ENCODE measurements at regions of chr7 and their contacts with region 1.

Region 1: DNA sequence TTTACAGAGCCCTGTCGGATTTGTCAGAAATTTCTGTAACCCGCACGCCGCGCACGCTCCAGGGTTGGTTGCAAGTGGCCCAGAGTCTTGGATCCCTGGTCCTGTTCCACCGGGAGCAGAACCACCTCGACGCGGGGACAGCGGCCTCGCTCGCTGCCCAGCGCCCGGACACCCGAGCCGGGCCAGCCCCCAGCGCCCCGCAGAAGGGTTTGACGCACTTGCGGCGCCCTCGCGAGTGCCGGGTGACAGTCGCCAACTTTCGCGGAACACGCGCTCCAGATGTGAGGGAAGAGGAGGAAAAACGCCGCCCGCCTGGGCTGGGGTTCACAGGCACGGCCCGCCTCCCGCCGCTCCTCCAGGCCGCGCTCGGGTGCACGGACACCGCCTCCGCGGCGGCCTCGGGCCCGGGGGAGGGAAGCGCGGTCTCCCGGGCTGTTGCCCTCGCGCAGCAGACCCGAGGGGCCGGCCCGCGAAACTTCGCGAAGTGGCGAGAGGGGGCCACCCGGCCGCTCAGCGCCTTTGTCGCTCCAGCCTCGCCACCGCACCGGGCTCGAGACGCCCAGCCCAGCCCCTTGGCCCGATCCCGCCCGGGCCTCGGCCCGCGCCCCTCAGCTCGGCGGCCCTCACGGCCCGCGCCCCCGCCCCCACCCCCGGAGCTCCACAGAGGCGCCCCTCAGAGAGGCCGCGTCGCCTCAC is 514 bp downstream of the RNF216 start:
- DNase-seq: peak in 1 of 2 experiments; percentile 25
- ATAC-seq: peak; percentile 77 to 78
- H3K4me3 ChIP-seq: peak overlapping the region; percentile 67
- H3K27ac ChIP-seq: peak overlapping the region; percentile 81 to 96
- H3K4me1 ChIP-seq: peaks cover 3% of the 10 kb centered on the region; the same call in 1 of the 3 replicates
- CTCF ChIP-seq: no peak
- EP300 ChIP-seq: no peak
- POLR2A ChIP-seq: no peak
- RAD21 ChIP-seq: no peak

Region 2: DNA sequence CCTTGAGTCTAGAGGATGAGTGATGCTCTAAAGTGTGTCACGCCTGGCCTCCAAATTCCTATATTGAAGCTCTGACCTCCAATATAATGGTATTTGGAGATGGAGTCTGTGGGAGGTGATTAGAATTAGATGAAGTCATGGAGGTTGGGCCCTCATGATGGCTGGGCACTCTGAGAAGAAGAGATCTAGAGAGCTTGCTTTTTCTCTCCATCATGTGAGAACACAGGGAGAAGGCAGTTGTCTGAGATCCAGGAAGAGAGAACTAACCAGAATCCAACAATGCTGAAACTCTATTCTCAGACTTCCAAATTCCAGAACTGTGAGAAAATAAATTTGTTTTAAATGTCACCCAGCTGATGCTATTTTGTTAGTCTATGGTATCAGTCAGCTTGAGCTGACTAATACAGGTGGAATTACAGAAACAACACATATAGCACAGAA is 14.6 kb before region 1 on chr7:
- CTCF ChIA-PET with region 1: interaction called, 42 read pairs
- POLR2A ChIA-PET with region 1: no interaction called
- DNase-seq: no peak
- ATAC-seq: peak; percentile 38 to 50; a peak in 5 of 6 replicates
- H3K4me3 ChIP-seq: no peak overlapping the region
- H3K27ac ChIP-seq: peak overlapping the region in 1 of 2 experiments; percentile 45; a peak in 3 of 6 replicates
- H3K4me1 ChIP-seq: peaks cover 33% of the 10 kb centered on the region
- CTCF ChIP-seq: no peak
- EP300 ChIP-seq: no peak
- POLR2A ChIP-seq: no peak
- RAD21 ChIP-seq: no peak

Region 3: DNA sequence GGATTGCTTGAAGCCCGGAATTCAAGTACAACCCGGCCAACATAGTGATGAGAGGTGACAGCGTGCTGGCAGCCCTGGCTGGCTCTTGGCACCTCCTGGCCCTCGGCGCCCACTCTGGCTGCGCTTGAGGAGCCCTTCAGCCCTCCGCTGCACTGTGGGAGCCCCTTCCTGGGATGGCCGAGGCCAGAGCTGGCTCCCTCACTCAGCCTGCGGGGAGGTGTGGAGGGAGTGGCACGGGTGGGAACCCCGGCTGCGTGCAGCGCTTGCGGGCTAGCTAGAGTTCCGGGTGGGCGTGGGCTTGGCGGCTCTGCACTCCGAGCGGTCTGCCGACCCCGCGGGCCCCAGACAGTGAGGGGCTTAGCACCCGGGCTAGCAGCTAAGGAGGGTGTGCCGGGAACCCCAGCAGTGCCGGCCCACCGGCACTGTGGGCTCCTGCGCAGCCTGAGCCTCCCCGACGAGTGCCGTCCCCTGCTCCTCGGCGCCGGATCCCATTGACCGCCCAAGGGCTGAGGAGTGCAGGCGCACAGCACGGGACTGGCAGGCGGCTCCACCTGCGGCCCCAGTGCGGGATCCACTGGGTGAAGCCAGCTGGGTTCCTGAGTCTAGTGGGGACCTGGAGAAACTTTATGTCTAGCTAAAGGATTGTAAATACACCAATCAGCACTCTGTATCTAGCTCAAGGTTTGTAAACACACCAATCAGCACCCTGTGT is 12.6 kb after region 1 on chr7:
- CTCF ChIA-PET with region 1: interaction called, 20 read pairs
- POLR2A ChIA-PET with region 1: no interaction called
- DNase-seq: no peak
- ATAC-seq: no peak
- H3K4me3 ChIP-seq: no peak overlapping the region
- H3K27ac ChIP-seq: no peak overlapping the region
- H3K4me1 ChIP-seq: no peaks in the 10 kb centered on the region
- CTCF ChIP-seq: no peak
- EP300 ChIP-seq: no peak
- POLR2A ChIP-seq: no peak
- RAD21 ChIP-seq: no peak

Region 4: DNA sequence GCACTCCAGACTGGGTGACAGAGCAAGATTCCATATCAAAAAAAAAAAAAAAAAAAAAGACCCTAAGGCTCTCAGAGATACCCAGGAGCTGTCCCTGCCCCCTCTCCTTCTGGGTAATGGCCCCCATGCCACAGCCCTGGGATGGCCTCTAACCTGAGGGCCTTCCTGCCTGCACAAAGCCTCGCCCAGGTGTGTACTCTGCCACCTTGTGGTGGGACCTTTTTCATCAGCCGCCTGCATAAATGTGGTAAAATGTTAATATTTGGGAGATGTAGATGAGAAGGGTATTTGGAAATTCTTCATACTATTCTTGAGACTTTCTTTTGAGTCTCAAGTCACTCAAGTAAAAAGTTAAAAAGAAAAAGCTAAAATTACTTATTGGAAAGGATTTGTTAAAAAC is 46.8 kb after region 1 on chr7:
- CTCF ChIA-PET with region 1: interaction called, 11 read pairs
- POLR2A ChIA-PET with region 1: interaction called, 3 read pairs
- DNase-seq: peak in 1 of 2 experiments; percentile 50
- ATAC-seq: no peak
- H3K4me3 ChIP-seq: no peak overlapping the region
- H3K27ac ChIP-seq: no peak overlapping the region
- H3K4me1 ChIP-seq: no peaks in the 10 kb centered on the region; the same call in 2 of the 3 replicates
- CTCF ChIP-seq: peak; percentile 58
- EP300 ChIP-seq: no peak
- POLR2A ChIP-seq: no peak
- RAD21 ChIP-seq: peak in 1 of 2 experiments; percentile 51; a peak in 2 of 5 replicates

Measured in A549 (cell line).